ENCODE measurements at regions of chr11 and their contacts with region 1.

Region 1: GRCh38 chr11:27395556-27396260 is 32.7 kb upstream of the CCDC34 start:
- DNase-seq: peak; percentile 31
- H3K4me3 ChIP-seq: no peak overlapping the region
- H3K27ac ChIP-seq: no peak overlapping the region
- H3K4me1 ChIP-seq: peaks cover 37% of the 10 kb centered on the region
- H3K27me3 ChIP-seq: no peaks in the 10 kb centered on the region
- CTCF ChIP-seq: no peak

Region 2: GRCh38 chr11:27385245-27385644 is 10.5 kb before region 1 on chr11:
- CTCF ChIA-PET with region 1: no interaction called
- POLR2A ChIA-PET with region 1: no interaction called
- intact Hi-C with region 1: loop called (anchors 1 kb)
- DNase-seq: peak; percentile 49
- H3K4me3 ChIP-seq: no peak overlapping the region
- H3K27ac ChIP-seq: no peak overlapping the region
- H3K4me1 ChIP-seq: peaks cover 14% of the 10 kb centered on the region
- H3K27me3 ChIP-seq: no peaks in the 10 kb centered on the region
- CTCF ChIP-seq: no peak

Region 3: GRCh38 chr11:27754035-27755017 is 358.6 kb after region 1 on chr11:
- CTCF ChIA-PET with region 1: no interaction called
- POLR2A ChIA-PET with region 1: no interaction called
- intact Hi-C with region 1: no loop called
- DNase-seq: peak; percentile 37
- H3K4me3 ChIP-seq: no peak overlapping the region
- H3K27ac ChIP-seq: no peak overlapping the region
- H3K4me1 ChIP-seq: no peaks in the 10 kb centered on the region
- H3K27me3 ChIP-seq: peaks cover 45% of the 10 kb centered on the region
- CTCF ChIP-seq: no peak

Measured in A673 (cell line).